Psoas muscle (tissue), 8 donors: ENCODE measurements at regions of chr1 and their contacts with region 1.

Region 1: GRCh38 chr1:185595835-185596667 is 138.1 kb upstream of the HMCN1 start:
- DNase-seq: no peak
- ATAC-seq: peak in 2 of 4 donors; percentile 37 to 53
- H3K4me3 ChIP-seq: no peak overlapping the region
- H3K27ac ChIP-seq: no peak overlapping the region
- H3K4me1 ChIP-seq: no peaks in the 10 kb centered on the region
- H3K27me3 ChIP-seq: no peaks in the 10 kb centered on the region
- CTCF ChIP-seq: peak; percentile 49

Region 2: DNA sequence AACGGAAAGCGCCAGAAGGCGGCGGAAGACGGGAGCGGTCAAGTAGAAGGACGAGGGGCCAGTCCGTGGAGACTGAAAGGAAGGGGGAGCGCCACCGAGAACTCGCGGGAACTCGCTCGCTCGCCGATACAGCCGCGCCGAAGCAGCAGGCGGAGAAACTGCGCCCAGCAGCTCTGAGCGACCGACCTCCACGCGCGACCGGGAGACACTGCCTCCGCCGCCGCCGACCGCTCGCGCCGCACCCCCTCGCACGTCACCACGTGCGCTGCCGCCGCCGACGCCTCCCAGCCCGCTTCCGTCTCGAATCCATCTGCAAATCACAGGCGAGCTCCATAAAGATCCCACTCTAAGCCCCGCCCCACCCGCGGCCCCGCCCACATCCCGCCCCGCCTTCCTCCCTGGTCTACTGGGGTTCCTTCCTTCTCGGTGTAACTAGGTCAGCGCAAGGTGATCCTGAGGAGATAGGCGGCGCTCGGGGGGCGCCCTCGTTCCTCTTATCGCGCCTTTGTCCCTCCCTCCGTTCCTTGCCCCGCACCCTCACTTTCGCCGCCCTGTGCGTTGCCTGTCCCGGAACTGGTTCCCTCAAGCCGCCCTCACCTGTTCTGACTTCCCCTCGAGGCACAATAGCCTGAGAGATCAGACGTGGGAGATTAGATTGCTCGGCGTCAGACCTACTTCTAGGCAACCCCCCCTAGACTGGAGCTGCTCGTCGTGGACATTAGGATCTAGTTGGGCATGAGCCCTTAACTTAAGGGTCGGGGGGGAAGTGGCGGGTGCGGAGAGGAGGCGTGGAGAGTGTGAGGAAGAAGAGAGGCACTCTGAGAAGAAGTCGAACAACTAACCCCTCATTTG is 278.8 kb before region 1 on chr1 and contains the start of gene IVNS1ABP:
- intact Hi-C with region 1: loop called in 1 of 2 experiments (anchors 5 kb)
- DNase-seq: peak; percentile 93 to 96
- ATAC-seq: peak; percentile 92 to 93 (median 92)
- H3K4me3 ChIP-seq: peak within 1 kb of the TSS; percentile 92
- H3K27ac ChIP-seq: peak within 1 kb of the TSS; percentile 91
- H3K4me1 ChIP-seq: peaks cover 33% of the 10 kb centered on the region
- H3K27me3 ChIP-seq: no peaks in the 10 kb centered on the region
- CTCF ChIP-seq: no peak
- total RNA-seq, gene IVNS1ABP: 27.6 to 49.9 (median 41.9) TPM